GM12878 (cell line): ENCODE measurements at regions of chr9 and their contacts with region 1.

Region 1: GRCh38 chr9:1837449-1838084 is 177.6 kb upstream of the SMARCA2 start:
- DNase-seq: peak; percentile 45
- ATAC-seq: peak; percentile 98
- H3K4me3 ChIP-seq: no peak overlapping the region
- H3K27ac ChIP-seq: no peak overlapping the region
- H3K4me1 ChIP-seq: no peaks in the 10 kb centered on the region
- H3K27me3 ChIP-seq: no peaks in the 10 kb centered on the region
- CTCF ChIP-seq: peak; percentile 70 to 77 (median 74)
- EP300 ChIP-seq: no peak
- POLR2A ChIP-seq: no peak
- RAD21 ChIP-seq: peak; percentile 71

Region 2: DNA sequence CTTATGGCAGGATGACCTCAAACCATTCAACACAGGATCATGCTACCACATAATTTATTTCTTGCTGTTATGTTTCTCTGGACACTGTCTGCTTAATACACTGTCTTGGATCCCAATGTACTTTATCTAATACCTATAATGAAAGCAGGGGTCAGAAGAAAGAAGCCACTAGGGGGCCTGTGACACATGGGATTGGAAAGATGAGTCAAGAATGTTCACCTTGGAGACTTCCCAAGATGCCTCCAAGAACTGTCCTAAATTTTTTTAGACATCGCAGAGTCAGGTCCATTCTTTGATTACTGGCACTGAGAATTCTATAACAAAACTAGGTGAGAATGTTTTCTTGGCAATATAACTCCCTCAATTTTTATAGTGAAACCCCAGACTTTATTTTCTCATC is 128.2 kb before region 1 on chr9:
- CTCF ChIA-PET with region 1: interaction called, 14 read pairs
- POLR2A ChIA-PET with region 1: no interaction called
- RAD21 ChIA-PET with region 1: interaction called, 9 read pairs
- SMC1A ChIA-PET with region 1: interaction called, 28 read pairs
- in situ Hi-C with region 1: no loop called
- intact Hi-C with region 1: loop called (anchors 2 kb)
- DNase-seq: no peak
- ATAC-seq: peak; percentile 64
- H3K4me3 ChIP-seq: no peak overlapping the region
- H3K27ac ChIP-seq: no peak overlapping the region
- H3K4me1 ChIP-seq: no peaks in the 10 kb centered on the region
- H3K27me3 ChIP-seq: no peaks in the 10 kb centered on the region
- CTCF ChIP-seq: peak; percentile 35 to 58 (median 55); a peak in 4 of 6 replicates
- EP300 ChIP-seq: no peak
- POLR2A ChIP-seq: no peak
- RAD21 ChIP-seq: peak; percentile 45

Region 3: DNA sequence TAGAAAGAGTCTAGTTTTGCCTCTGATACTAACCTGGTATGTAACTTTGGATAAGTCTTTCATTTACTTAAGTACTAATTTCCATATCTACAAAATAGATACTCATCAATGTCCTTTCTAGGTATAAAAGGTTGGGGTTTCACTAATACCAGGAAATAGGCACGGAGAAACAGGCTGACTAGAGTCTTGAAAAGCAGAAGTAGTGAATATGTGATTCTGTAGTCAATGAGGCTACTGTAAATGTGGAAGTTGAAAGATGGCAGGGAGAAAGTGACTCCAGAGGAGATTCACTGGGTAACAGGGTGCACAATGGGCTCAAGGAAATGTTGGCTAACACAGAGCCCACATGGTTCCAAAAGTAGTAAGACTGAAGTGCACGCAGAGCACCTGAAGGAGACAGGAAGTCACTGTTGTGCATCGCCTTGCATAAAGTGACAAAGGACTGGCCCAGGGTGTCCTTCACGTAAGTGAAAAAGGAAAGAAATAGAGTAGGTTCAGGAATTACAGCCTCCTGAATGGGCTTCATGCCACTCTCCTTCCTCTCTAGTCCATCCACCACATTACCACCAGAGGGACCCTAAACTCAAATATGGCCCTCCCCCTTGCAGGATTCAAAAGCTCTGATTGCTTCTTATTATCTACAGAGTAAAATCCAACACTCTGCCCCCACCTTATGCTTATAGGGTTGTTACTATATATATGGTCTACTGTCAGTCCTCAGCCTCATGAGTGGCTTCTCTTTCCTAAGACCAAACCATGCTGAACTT is 110.4 kb before region 1 on chr9:
- CTCF ChIA-PET with region 1: interaction called, 33 read pairs
- POLR2A ChIA-PET with region 1: no interaction called
- RAD21 ChIA-PET with region 1: interaction called, 17 read pairs
- SMC1A ChIA-PET with region 1: interaction called, 14 read pairs
- in situ Hi-C with region 1: no loop called
- intact Hi-C with region 1: loop called (anchors 5 kb)
- DNase-seq: no peak
- ATAC-seq: peak; percentile 87
- H3K4me3 ChIP-seq: no peak overlapping the region
- H3K27ac ChIP-seq: no peak overlapping the region
- H3K4me1 ChIP-seq: peaks cover 6% of the 10 kb centered on the region; the same call in 1 of the 2 replicates
- H3K27me3 ChIP-seq: no peaks in the 10 kb centered on the region
- CTCF ChIP-seq: peak; percentile 26 to 45 (median 38); a peak in 5 of 6 replicates
- EP300 ChIP-seq: no peak
- POLR2A ChIP-seq: no peak
- RAD21 ChIP-seq: peak; percentile 62

Region 4: GRCh38 chr9:1732670-1733069 is 104.9 kb before region 1 on chr9:
- CTCF ChIA-PET with region 1: interaction called, 33 read pairs
- POLR2A ChIA-PET with region 1: no interaction called
- RAD21 ChIA-PET with region 1: interaction called, 17 read pairs
- SMC1A ChIA-PET with region 1: interaction called, 14 read pairs
- in situ Hi-C with region 1: no loop called
- intact Hi-C with region 1: loop called (anchors 5 kb)
- DNase-seq: no peak
- ATAC-seq: peak; percentile 84
- H3K4me3 ChIP-seq: no peak overlapping the region
- H3K27ac ChIP-seq: no peak overlapping the region
- H3K4me1 ChIP-seq: no peaks in the 10 kb centered on the region
- H3K27me3 ChIP-seq: no peaks in the 10 kb centered on the region
- CTCF ChIP-seq: peak; percentile 39 to 47 (median 43); a peak in 5 of 6 replicates
- EP300 ChIP-seq: no peak
- POLR2A ChIP-seq: no peak
- RAD21 ChIP-seq: peak; percentile 49

Region 5: GRCh38 chr9:1857808-1858207 is 20.2 kb after region 1 on chr9:
- CTCF ChIA-PET with region 1: interaction called, 46 read pairs
- POLR2A ChIA-PET with region 1: no interaction called
- RAD21 ChIA-PET with region 1: interaction called, 4 read pairs
- SMC1A ChIA-PET with region 1: interaction called, 5 read pairs
- in situ Hi-C with region 1: no loop called
- intact Hi-C with region 1: no loop called
- DNase-seq: no peak
- ATAC-seq: no peak
- H3K4me3 ChIP-seq: no peak overlapping the region
- H3K27ac ChIP-seq: no peak overlapping the region
- H3K4me1 ChIP-seq: no peaks in the 10 kb centered on the region
- H3K27me3 ChIP-seq: no peaks in the 10 kb centered on the region
- CTCF ChIP-seq: no peak
- EP300 ChIP-seq: no peak
- POLR2A ChIP-seq: no peak
- RAD21 ChIP-seq: no peak

Region 6: DNA sequence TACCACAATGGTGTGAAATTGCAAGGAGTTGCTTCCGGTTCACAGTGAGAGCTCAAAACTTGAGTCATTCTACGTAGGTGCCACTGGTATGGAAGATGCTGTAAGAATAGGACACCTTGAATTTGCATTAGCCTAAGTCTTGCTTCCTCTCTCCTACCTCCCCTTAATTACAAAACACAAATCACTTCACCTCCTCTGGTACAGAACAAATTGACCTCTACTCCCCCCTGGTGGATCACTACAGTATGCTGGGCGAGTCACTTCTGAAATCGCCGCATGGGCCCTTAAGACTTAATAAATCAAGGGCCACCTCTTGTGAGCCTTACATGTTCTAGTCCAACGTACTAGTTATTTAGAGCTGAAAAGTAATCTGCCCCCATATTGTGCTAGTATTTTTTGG is 32.3 kb after region 1 on chr9:
- CTCF ChIA-PET with region 1: interaction called, 59 read pairs
- POLR2A ChIA-PET with region 1: interaction called, 3 read pairs
- RAD21 ChIA-PET with region 1: interaction called, 7 read pairs
- SMC1A ChIA-PET with region 1: interaction called, 30 read pairs
- in situ Hi-C with region 1: no loop called
- intact Hi-C with region 1: no loop called
- DNase-seq: no peak
- ATAC-seq: peak; percentile 82
- H3K4me3 ChIP-seq: no peak overlapping the region
- H3K27ac ChIP-seq: 0 out of 2 replicates have a peak overlapping the region, but pooled peaks have one; percentile 14
- H3K4me1 ChIP-seq: peaks cover 28% of the 10 kb centered on the region
- H3K27me3 ChIP-seq: no peaks in the 10 kb centered on the region
- CTCF ChIP-seq: peak; percentile 53 to 72 (median 62)
- EP300 ChIP-seq: no peak
- POLR2A ChIP-seq: no peak
- RAD21 ChIP-seq: peak; percentile 91

Region 7: GRCh38 chr9:1910269-1910811 is 72.8 kb after region 1 on chr9:
- CTCF ChIA-PET with region 1: no interaction called
- POLR2A ChIA-PET with region 1: no interaction called
- RAD21 ChIA-PET with region 1: no interaction called
- SMC1A ChIA-PET with region 1: no interaction called
- in situ Hi-C with region 1: no loop called
- intact Hi-C with region 1: no loop called
- DNase-seq: no peak
- ATAC-seq: no peak
- H3K4me3 ChIP-seq: no peak overlapping the region
- H3K27ac ChIP-seq: no peak overlapping the region
- H3K4me1 ChIP-seq: peaks cover 5% of the 10 kb centered on the region; the same call in 1 of the 2 replicates
- H3K27me3 ChIP-seq: no peaks in the 10 kb centered on the region
- CTCF ChIP-seq: no peak
- EP300 ChIP-seq: no peak
- POLR2A ChIP-seq: no peak
- RAD21 ChIP-seq: no peak